PC-9 (cell line): ENCODE measurements at regions of chr2 and their contacts with region 1.

Region 1: DNA sequence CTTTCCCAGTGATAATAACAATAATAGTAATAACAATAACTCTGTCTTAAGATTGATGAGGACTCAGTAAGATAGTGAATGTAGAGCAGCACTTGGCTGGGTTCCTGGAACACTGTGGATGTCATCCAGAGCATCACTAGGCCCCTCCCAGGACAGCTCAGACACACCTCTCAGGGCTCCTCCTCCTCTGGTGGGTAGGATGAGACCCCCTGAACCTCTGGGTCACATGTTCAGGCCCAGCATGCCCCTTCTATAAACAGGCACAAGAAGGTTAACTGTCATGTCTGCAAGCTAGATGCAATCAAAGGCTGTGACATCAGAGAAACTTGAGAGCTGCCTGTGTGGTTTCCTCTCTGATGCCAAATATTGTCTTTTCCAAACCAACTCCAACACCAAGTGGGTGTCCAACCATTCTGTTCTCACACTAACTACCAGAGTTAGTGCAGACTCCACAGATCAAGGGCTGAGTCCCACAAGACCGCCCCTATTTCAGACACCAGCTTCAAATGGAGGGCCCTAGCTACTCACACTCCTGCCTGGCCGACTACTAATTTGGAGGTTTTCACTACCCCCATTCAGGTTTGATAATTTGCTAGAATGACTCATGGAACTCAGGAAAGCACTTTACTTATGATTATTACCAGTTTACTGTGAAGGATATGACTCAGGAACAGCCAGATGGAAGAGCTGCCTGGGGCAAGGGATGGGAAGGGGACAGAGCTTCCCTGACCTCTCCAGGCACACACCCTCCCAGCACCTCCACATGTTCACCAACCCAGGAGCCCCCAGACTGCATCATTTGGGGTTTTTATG is 46.4 kb upstream of the BZW1 start:
- DNase-seq: peak; percentile 55 to 94
- H3K4me3 ChIP-seq: peak overlapping the region; percentile 16; the same call in 1 of the 2 replicates
- H3K27ac ChIP-seq: peak overlapping the region; percentile 94
- H3K4me1 ChIP-seq: peaks cover 67% of the 10 kb centered on the region
- H3K27me3 ChIP-seq: no peaks in the 10 kb centered on the region
- CTCF ChIP-seq: no peak

Region 2: DNA sequence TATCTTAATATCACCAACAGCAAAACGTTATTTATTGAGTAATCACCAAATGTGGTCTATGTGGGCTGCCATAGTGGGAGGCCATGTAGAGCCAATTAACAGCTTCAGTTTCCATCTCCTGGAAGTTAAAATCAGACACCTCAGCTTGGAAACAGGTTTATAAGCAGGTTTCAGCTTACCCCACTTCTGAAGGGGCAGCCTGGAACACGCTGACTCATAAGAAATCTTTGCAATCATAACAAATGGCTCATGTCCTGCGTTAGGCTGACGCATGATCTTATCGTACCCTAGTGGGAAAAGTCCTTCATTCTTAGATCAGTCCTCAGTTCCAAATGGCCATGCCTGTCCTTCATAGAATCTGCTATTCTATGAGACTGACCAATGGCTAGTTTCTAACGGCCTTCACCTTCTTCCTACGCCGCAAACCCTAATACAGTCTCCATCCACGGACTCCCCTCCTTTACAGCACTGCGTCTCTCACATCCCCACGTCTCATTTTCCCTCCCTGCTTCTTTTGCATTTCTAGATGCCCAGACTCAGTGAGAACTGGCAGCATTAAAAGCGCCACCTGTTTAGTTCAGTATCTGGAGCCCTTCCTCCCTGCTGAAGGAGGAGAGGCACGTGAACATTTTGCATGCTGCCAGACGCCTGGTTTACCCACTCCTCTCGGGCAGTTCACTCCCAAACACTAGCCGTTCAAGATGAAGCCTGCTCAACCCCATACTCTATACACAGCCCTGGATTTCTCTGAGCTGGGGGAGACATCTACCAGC is 22.2 kb after region 1 on chr2:
- CTCF ChIA-PET with region 1: no interaction called
- POLR2A ChIA-PET with region 1: interaction called, 3 read pairs
- intact Hi-C with region 1: loop called (anchors 1 kb)
- DNase-seq: peak; percentile 68 to 96
- H3K4me3 ChIP-seq: peak overlapping the region; percentile 47; the same call in 1 of the 2 replicates
- H3K27ac ChIP-seq: peak overlapping the region; percentile 99
- H3K4me1 ChIP-seq: peaks cover 72% of the 10 kb centered on the region
- H3K27me3 ChIP-seq: no peaks in the 10 kb centered on the region
- CTCF ChIP-seq: no peak

Region 3: DNA sequence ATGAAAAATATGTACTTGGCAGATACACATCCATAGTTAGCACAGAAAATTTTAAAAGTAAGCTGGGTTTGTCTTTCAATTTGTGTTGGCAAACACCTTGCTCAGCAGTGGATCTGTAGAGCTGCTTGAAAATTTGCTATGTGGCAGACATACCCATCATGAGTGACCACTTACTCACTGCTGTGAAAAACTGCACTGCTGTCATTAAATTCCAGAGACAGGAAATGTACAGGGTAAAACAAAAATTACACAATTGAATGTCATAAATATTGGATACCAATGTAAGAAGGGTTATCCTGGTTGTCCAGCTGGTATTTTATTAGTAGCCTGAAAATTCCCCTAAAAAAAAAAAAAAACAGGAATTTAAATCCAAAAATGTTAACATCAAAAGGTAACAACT is 148.3 kb after region 1 on chr2:
- CTCF ChIA-PET with region 1: no interaction called
- POLR2A ChIA-PET with region 1: no interaction called
- intact Hi-C with region 1: no loop called
- DNase-seq: no peak
- H3K4me3 ChIP-seq: no peak overlapping the region
- H3K27ac ChIP-seq: no peak overlapping the region
- H3K4me1 ChIP-seq: no peaks in the 10 kb centered on the region
- H3K27me3 ChIP-seq: no peaks in the 10 kb centered on the region
- CTCF ChIP-seq: no peak

Region 4: DNA sequence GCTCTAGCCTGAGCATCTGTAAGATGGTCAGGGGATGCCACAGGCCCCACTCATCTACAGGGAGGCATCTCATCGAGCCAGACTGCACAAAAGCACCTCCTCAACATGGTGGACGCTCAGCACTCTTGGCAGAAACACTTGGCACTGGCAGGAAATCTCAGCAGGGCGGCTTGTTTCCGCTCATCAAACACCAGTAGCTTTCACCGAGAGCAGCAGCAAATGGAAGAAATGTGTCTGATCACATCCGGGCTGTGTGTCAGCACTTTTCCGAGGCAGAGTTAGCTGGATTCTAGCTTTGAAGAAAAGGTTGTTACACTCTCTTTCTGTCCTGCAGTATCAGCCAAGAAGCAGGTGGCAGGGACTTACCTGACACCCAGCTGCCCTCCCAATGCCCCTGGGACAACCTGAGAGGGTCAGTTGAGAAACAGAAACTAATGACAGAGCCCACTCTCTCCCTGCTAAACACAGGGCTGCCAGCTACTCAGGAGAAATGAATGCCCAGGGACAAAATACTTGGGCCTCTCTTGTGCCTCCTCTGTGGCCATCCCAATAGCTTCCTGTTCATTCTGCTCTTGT is 1199.4 kb after region 1 on chr2:
- CTCF ChIA-PET with region 1: no interaction called
- POLR2A ChIA-PET with region 1: no interaction called
- intact Hi-C with region 1: no loop called
- DNase-seq: no peak
- H3K4me3 ChIP-seq: no peak overlapping the region
- H3K27ac ChIP-seq: no peak overlapping the region
- H3K4me1 ChIP-seq: no peaks in the 10 kb centered on the region
- H3K27me3 ChIP-seq: no peaks in the 10 kb centered on the region
- CTCF ChIP-seq: no peak